Spleen (tissue), 13 donors: ENCODE measurements at regions of chr10 and their contacts with region 1.

Region 1: DNA sequence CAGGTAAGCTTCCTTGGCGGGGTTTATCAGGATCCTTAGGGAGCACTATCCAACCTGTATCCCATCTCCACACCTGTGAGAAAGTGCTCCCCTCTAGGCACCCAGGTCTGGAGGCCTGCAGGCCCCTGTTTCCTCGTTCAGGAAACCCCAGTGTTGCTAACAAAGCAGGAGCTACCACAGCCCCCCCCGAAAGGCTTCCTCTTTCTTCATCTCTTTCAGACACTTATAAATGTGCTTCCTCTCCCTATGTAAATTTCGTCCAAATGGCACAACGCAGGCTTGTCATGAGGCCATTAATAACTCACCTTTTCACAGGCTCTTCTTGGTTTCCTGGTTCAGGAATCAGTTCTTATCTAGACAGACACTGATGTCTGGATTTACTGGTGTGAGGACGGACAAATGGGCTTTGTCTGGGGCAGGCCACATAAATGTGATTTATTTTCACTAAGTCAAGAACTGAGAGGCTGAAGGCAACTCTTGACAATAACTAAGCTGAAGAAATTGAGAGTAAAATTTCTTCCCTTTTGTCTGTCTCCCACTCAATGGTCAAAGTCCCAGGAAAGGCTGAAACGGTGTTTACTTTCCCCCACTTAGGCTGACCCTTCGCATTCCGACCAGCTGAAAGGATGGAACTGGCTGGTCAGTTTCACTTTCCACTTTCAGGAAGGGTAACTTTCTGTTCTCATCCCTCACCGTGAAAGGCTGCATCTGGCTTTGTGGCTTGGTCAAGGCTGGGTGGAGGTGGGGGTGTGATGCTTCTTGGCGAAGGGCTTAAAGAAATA is 46.8 kb downstream of the PIK3AP1 start:
- DNase-seq: peak; percentile 89
- H3K4me3 ChIP-seq: peak overlapping the region in 5 of 8 donors; percentile 5 to 61 (median 13)
- H3K27ac ChIP-seq: peak overlapping the region; percentile 65 to 97 (median 92)
- H3K4me1 ChIP-seq: peaks cover 44 to 100% (median 98%) of the 10 kb centered on the region in 6 donors
- H3K27me3 ChIP-seq: no peaks in the 10 kb centered on the region
- CTCF ChIP-seq: no peak
- POLR2A ChIP-seq: no peak

Region 2: GRCh38 chr10:96719850-96720421 is 46.4 kb after region 1 on chr10:
- intact Hi-C with region 1: loop called (anchors 5 kb)
- DNase-seq: peak; percentile 96
- H3K4me3 ChIP-seq: peak overlapping the region; percentile 51 to 81 (median 69)
- H3K27ac ChIP-seq: peak overlapping the region; percentile 63 to 97 (median 92)
- H3K4me1 ChIP-seq: peaks cover 26 to 73% (median 57%) of the 10 kb centered on the region in 6 donors
- H3K27me3 ChIP-seq: peaks cover 0 to 4% (median 0%) of the 10 kb centered on the region in 7 donors
- CTCF ChIP-seq: peak; percentile 39 to 83 (median 72)
- POLR2A ChIP-seq: no peak

Region 3: DNA sequence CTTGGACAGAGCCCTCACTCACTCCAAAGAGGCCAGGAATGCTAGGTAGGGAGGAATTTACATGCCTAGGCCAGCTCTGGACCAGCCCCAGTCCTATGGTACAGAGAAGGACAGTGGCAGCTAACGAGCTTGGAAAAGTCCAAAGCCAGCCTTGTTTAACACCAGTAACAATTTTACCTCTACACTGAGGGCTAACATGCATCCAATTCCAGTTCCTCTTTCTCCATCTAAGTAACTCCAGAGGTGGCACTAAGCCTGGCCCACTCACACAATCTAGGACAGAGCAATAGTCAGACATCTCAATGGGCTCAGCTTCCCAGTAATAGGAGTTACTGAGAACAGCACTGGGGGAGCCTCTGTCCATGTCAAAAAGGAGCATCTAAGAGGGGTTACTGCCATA is 152.9 kb after region 1 on chr10:
- intact Hi-C with region 1: no loop called
- DNase-seq: no peak
- H3K4me3 ChIP-seq: no peak overlapping the region
- H3K27ac ChIP-seq: peak overlapping the region in 2 of 8 donors; percentile 8 to 19
- H3K4me1 ChIP-seq: peaks cover 9 to 23% (median 16%) of the 10 kb centered on the region in 6 donors
- H3K27me3 ChIP-seq: no peaks in the 10 kb centered on the region
- CTCF ChIP-seq: no peak
- POLR2A ChIP-seq: no peak